ENCODE measurements at regions of chr12 and their contacts with region 1.

Region 1: GRCh38 chr12:12024911-12025682 is 45.6 kb upstream of the BCL2L14 start:
- DNase-seq: no peak
- H3K4me3 ChIP-seq: no peak overlapping the region
- CTCF ChIP-seq: no peak

Region 2: DNA sequence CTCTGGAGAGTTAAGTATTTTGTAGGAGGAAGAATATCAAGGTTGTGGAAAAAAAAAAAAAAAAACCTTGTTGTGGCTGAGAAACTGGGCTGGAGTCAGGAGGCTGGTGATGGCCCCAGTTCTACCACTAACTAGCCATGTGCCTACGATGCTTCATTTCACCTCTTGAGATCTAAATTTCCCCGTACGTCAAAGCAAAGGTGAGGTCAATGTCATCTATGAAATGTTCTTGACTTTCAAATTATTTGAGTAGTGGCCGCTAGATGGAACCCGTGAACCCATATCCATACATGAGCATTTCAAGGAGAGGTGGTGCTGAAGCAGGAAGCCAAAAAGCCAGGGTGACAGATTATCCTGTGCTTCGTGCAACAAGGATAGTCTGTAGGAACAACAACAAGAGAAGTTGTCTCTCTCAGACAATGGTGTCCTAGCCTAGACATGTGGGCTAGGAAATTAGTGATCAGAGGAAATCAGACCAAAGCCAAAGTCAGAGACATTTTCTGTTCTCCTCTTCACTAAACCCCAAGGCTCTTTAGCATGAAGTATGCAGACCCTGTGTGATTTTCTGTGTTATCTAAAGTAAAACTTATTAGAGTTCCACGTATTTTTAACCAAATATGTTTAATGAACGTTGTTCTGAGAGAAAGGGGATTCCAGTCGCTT is 471.1 kb before region 1 on chr12:
- CTCF ChIA-PET with region 1: interaction called, 10 read pairs
- POLR2A ChIA-PET with region 1: no interaction called
- DNase-seq: no peak
- H3K4me3 ChIP-seq: no peak overlapping the region
- CTCF ChIP-seq: peak; percentile 54

Region 3: DNA sequence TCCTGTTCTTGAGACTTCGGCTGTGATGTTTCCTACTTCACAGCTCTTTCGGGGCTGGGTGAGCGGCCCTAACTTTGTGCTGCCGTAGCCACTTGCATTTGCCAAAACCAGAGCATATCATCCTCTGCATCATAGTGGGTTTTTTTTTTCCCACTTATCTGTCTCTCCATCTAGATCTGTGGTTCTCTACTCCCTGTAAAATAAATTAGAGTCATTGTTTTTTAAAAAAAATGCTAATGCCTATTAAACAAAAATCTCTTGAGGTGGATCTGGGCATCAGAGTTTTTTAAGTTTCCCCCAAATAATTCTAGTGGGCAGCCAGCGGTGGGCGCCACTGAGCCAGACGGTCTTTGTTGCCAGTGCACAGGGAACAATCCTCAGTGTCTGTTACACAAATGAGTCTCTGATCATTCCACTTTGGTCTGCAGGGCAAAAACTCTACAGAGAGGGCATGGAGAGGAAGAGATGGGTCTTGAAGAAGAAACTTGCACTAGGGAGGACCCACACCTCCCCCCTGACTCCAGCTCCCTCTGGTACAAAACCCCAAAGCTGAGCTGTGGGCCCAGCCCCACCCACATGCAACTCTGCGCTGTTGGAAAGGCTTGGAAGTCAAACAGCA is 16.8 kb before region 1 on chr12:
- CTCF ChIA-PET with region 1: no interaction called
- POLR2A ChIA-PET with region 1: no interaction called
- DNase-seq: no peak
- H3K4me3 ChIP-seq: no peak overlapping the region
- CTCF ChIP-seq: no peak